ENCODE measurements at regions of chr19 and their contacts with region 1.

Region 1: DNA sequence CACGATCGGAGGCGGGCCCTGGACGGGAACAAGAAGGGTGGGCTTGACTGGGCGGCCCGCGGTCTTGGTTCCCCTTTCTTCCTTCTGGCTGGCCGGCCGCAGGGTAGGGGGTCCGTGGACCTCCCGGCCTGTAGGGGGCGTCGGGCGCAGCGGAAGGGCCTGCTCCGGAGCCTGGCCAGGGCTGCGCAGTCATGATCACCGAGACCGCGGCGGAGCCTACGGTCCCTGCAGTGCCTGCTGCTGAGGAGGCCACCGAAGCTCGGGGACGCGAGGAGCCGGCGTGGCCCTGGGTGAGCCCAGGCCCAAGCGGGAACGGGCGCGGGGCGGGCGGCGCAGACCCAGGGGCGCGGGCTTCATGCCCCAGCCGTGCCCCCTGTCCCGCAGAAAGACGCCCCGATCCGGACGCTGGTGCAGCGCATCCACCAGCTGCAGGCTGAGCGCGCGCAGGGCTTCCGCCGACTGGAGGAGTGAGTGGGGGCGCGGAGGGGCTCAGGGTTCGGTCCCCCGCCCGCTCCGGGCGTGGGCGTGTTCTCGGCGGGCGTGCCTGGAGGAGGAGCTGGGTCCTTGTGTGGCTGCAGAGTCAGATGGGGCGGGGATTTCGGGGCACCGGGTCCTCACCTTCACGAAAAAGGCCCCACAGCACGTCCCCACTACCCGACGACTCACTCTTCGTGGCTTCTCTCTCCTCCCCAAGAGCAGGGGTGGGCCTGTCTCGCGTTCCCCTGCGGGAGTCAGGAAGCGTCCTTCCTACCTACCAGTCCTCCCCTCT is at the start of gene REX1BD:
- DNase-seq: peak; percentile 66
- H3K4me3 ChIP-seq: peak within 1 kb of the TSS; percentile 72 to 89 (median 83)
- H3K27ac ChIP-seq: peak within 1 kb of the TSS; percentile 35
- H3K4me1 ChIP-seq: peaks cover 19% of the 10 kb centered on the region
- H3K27me3 ChIP-seq: no peaks in the 10 kb centered on the region
- CTCF ChIP-seq: peak; percentile 69 to 85
- total RNA-seq, gene REX1BD: 30.0 to 59.0 TPM

Region 2: GRCh38 chr19:18460900-18461299 is 127.9 kb before region 1 on chr19:
- CTCF ChIA-PET with region 1: interaction called, 7 read pairs
- dilution Hi-C with region 1: no loop called
- in situ Hi-C with region 1: loop called in 1 of 2 experiments (anchors 10 kb)
- intact Hi-C with region 1: loop called (anchors 2 kb)
- DNase-seq: no peak
- H3K4me3 ChIP-seq: no peak overlapping the region
- H3K27ac ChIP-seq: no peak overlapping the region
- H3K4me1 ChIP-seq: peaks cover 23% of the 10 kb centered on the region
- H3K27me3 ChIP-seq: no peaks in the 10 kb centered on the region
- CTCF ChIP-seq: no peak

Region 3: GRCh38 chr19:18477042-18477779 is 111.6 kb before region 1 on chr19:
- CTCF ChIA-PET with region 1: no interaction called
- dilution Hi-C with region 1: no loop called
- in situ Hi-C with region 1: no loop called
- intact Hi-C with region 1: no loop called
- DNase-seq: no peak
- H3K4me3 ChIP-seq: no peak overlapping the region
- H3K27ac ChIP-seq: no peak overlapping the region
- H3K4me1 ChIP-seq: peaks cover 33% of the 10 kb centered on the region
- H3K27me3 ChIP-seq: no peaks in the 10 kb centered on the region
- CTCF ChIP-seq: no peak

Region 4: DNA sequence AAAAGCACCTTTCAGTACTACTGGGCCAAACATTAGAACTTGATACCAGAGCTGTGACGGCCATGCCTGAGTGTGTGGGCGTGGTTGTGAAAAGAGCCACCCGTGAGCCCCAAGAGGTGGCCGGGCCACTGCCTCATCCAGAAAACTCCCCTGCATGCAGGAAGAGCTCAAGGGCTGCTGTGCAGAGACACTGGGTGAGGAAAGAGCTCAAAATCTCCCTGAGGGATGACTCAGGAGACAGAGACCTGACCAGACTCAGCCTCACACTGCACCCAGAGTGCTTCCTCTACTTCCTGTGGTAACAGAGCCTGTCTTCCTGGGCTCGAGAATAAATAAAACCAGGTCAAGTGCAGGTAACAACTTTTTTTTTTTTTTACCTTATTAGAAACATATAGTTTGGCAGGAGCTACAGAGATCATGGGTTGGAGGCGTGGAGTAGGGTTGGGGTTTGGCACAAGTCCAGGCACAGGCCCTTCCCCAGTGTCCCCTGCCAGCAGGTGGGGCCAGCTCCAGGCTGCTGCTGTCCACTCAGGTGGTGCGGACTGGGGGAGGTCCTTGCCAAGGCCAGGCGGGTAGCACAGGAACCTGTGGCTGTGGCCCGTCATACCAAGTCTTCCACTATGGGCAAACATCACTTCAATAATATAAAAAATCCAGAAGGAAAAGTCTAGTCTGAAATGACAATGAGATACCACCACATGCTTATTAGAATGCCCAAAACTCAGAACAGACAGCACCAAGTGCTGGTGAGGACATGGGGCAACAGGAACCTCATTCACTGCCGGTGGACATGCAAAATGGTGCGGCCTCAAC is 92.4 kb before region 1 on chr19:
- CTCF ChIA-PET with region 1: interaction called, 12 read pairs
- dilution Hi-C with region 1: no loop called
- in situ Hi-C with region 1: no loop called
- intact Hi-C with region 1: no loop called
- DNase-seq: peak; percentile 90
- H3K4me3 ChIP-seq: no peak overlapping the region
- H3K27ac ChIP-seq: peak overlapping the region; percentile 36
- H3K4me1 ChIP-seq: peaks cover 29% of the 10 kb centered on the region
- H3K27me3 ChIP-seq: no peaks in the 10 kb centered on the region
- CTCF ChIP-seq: peak in 1 of 2 donors; percentile 38

Region 5: DNA sequence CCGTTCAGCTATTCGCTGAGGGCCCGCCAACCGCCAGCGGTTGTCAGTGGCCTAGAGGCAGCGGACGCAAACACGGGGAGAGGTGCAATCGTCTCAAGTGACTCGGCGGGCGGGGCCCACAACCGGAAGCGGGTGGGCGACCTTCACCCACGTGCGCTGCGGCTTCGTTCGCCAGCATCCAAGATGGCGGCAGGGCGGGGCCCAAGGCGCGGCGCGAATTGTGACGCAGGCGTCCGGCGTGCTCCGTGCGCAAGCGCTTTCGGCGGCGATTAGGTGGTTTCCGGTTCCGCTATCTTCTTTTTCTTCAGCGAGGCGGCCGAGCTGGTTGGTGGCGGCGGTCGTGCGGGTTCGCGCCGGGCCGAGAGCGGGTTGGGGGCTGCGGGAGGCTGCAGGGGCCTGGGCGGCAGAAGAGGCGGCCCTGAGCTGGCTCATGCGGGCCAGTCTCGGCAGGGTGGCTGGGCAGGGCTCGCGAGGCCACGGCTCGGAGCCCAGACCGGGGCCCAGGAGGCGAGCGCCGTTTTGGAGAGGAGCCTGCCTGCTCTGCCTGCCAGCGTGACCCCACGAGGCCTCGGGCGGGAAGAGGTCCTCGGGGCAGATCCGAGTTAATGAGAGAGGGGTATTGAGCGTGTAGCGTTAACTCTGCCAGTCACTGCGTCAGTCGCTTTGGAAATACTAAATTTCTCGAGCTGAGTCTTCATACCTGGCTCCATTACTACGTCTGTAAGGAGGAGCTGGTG is 17.1 kb before region 1 on chr19 and contains the start of gene UBA52:
- CTCF ChIA-PET with region 1: no interaction called
- dilution Hi-C with region 1: no loop called
- in situ Hi-C with region 1: no loop called
- intact Hi-C with region 1: loop called (anchors 1 kb)
- DNase-seq: peak; percentile 98
- H3K4me3 ChIP-seq: peak within 1 kb of the TSS; percentile 72 to 90 (median 89)
- H3K27ac ChIP-seq: peak within 1 kb of the TSS; percentile 85
- H3K4me1 ChIP-seq: peaks cover 14% of the 10 kb centered on the region
- H3K27me3 ChIP-seq: no peaks in the 10 kb centered on the region
- CTCF ChIP-seq: no peak
- total RNA-seq, gene UBA52: 698 to 1,133 TPM

Region 6: GRCh38 chr19:18634612-18635297 is 46.0 kb after region 1 on chr19:
- CTCF ChIA-PET with region 1: no interaction called
- dilution Hi-C with region 1: no loop called
- in situ Hi-C with region 1: no loop called
- intact Hi-C with region 1: no loop called
- DNase-seq: no peak
- H3K4me3 ChIP-seq: no peak overlapping the region
- H3K27ac ChIP-seq: no peak overlapping the region
- H3K4me1 ChIP-seq: peaks cover 5% of the 10 kb centered on the region
- H3K27me3 ChIP-seq: no peaks in the 10 kb centered on the region
- CTCF ChIP-seq: no peak

Region 7: GRCh38 chr19:18756896-18757295 is 168.1 kb after region 1 on chr19:
- CTCF ChIA-PET with region 1: no interaction called
- dilution Hi-C with region 1: loop called (anchors 5 kb)
- in situ Hi-C with region 1: no loop called
- intact Hi-C with region 1: no loop called
- DNase-seq: peak; percentile 90
- H3K4me3 ChIP-seq: no peak overlapping the region
- H3K27ac ChIP-seq: peak overlapping the region; percentile 66
- H3K4me1 ChIP-seq: peaks cover 21% of the 10 kb centered on the region
- H3K27me3 ChIP-seq: no peaks in the 10 kb centered on the region
- CTCF ChIP-seq: peak in 1 of 2 donors; percentile 23

Region 8: DNA sequence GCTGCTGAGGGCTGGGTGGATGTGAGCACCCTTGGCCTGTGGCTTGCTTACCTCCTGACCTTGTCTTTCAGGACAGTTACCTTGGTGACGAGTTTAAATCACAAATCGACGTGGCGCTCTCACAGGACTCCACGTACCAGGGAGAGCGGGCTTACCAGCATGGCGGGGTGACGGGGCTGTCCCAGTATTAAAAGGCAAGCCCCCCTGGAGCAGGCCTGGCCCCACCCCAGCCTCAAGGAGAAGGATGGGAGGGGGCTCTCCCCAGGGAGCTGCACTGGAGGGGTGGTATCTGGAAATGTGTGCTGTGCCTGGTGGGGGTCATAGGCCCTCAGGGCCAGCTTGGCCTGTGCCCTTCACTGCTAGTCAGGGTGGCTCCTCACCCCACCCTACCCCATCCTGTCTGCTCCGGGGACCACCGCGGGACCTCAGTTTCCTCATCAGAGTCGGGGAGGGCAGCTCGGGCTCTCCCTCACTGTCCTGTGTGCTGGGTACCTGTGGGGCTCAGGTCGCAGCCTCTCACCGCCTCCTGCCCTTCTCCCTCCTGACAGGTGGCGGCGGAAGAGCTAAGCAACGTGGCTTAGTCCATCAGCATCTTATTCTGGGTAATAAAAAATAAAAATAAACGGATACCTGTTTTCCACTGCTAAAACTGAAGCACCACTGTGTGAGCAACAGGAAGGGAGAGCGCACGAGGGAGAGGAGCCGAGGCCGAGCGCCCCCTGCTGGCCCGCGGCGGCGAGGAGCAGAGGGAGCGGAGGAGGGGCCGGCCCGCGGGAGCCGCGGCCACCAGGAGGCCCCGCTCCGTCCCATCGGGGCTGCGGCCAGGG is 277.4 kb after region 1 on chr19:
- CTCF ChIA-PET with region 1: no interaction called
- dilution Hi-C with region 1: no loop called
- in situ Hi-C with region 1: no loop called
- intact Hi-C with region 1: loop called (anchors 5 kb)
- DNase-seq: peak; percentile 39
- H3K4me3 ChIP-seq: no peak overlapping the region
- H3K27ac ChIP-seq: no peak overlapping the region
- H3K4me1 ChIP-seq: peaks cover 14% of the 10 kb centered on the region
- H3K27me3 ChIP-seq: no peaks in the 10 kb centered on the region
- CTCF ChIP-seq: peak; percentile 81 to 88